ENCODE measurements at regions of chr1 and their contacts with region 1.

Region 1: GRCh38 chr1:161177112-161177935 is at the start of gene B4GALT3:
- DNase-seq: peak; percentile 87
- H3K4me3 ChIP-seq: peak within 1 kb of the TSS; percentile 86
- H3K27ac ChIP-seq: peak within 1 kb of the TSS; percentile 60
- H3K4me1 ChIP-seq: peaks cover 33% of the 10 kb centered on the region
- CTCF ChIP-seq: peak; percentile 40; the same call in 1 of the 2 replicates
- total RNA-seq, gene B4GALT3: 36.2 and 39.1 TPM in 2 replicates

Region 2: GRCh38 chr1:161305867-161306519 is 128.7 kb after region 1 on chr1:
- CTCF ChIA-PET with region 1: interaction called, 15 read pairs
- POLR2A ChIA-PET with region 1: no interaction called
- intact Hi-C with region 1: no loop called
- DNase-seq: peak; percentile 95
- H3K4me3 ChIP-seq: peak overlapping the region; percentile 76
- H3K27ac ChIP-seq: peak overlapping the region; percentile 47
- H3K4me1 ChIP-seq: peaks cover 28% of the 10 kb centered on the region
- CTCF ChIP-seq: peak; percentile 79

Measured in OCI-LY7 (cell line).